Sigmoid colon (tissue), 7 donors: ENCODE measurements at regions of chr7 and their contacts with region 1.

Region 1: GRCh38 chr7:37201003-37201875 is 247.4 kb downstream of the ELMO1 start:
- DNase-seq: peak; percentile 94
- H3K4me3 ChIP-seq: no peak overlapping the region
- H3K27ac ChIP-seq: peak overlapping the region; percentile 72 to 88 (median 78)
- H3K4me1 ChIP-seq: peaks cover 0 to 43% (median 32%) of the 10 kb centered on the region in 4 donors
- H3K27me3 ChIP-seq: no peaks in the 10 kb centered on the region
- CTCF ChIP-seq: peak; percentile 73 to 84 (median 79)
- EP300 ChIP-seq: peak in 2 of 4 donors; percentile 21 to 82
- POLR2A ChIP-seq: no peak

Region 2: DNA sequence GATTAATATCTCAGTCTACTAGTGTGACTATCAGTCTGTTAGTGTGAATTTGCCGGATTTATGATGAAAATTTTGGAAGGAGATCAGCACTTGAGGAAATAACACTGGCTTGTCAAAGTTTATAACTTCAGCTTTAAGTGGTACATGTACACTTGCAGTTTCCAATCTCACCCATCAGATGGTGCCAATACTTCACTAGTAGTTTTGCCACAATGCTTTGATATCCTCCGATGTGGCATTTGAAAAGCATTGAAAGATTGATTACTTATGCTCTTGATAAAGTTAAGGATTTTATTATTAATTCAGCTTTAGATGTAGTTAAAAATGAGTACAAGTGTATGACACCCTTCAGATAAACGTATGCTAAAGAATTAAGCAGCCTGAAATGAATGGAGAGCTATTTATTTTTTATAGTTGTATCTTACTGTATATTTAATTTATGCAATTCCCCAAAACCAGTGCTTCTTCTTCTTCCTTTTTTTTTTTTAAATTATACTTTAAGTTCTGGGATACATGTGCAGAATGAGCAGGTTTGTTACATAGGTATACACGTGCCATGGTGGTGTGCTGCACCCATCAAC is 713.4 kb before region 1 on chr7:
- intact Hi-C with region 1: loop called (anchors 5 kb)
- DNase-seq: no peak
- H3K4me3 ChIP-seq: no peak overlapping the region
- H3K27ac ChIP-seq: no peak overlapping the region
- H3K4me1 ChIP-seq: no peaks in the 10 kb centered on the region
- H3K27me3 ChIP-seq: no peaks in the 10 kb centered on the region
- CTCF ChIP-seq: peak in 3 of 4 experiments; percentile 23 to 59 (median 46)
- EP300 ChIP-seq: no peak
- POLR2A ChIP-seq: no peak

Region 3: DNA sequence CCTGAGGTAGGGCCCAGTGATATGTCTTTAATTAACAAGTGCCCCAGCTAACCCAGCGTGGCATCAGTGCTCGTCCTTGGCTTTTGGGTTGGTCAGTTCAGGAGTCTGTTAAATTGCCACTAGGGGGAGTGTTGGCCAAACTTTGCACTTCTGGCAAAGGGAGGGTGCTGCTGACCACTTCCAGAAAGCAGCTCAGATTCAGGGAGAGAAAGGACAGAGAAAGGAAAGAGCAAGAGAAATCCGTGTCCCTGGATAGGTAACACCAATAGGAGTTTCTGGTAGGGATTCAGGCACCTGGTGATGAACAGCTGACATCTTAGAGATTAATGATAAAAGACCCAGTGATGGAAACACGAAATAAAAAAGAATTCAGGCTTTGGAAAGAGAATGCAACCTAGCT is 233.9 kb before region 1 on chr7:
- intact Hi-C with region 1: loop called (anchors 1 kb)
- DNase-seq: peak; percentile 83
- H3K4me3 ChIP-seq: no peak overlapping the region
- H3K27ac ChIP-seq: peak overlapping the region in 1 of 4 donors; percentile 39
- H3K4me1 ChIP-seq: peaks cover 0 to 10% (median 4%) of the 10 kb centered on the region in 4 donors
- H3K27me3 ChIP-seq: no peaks in the 10 kb centered on the region
- CTCF ChIP-seq: peak in 3 of 4 experiments; percentile 64 to 83 (median 76)
- EP300 ChIP-seq: no peak
- POLR2A ChIP-seq: no peak

Region 4: GRCh38 chr7:37181550-37181932 is 19.7 kb before region 1 on chr7:
- intact Hi-C with region 1: loop called (anchors 2 kb)
- DNase-seq: no peak
- H3K4me3 ChIP-seq: no peak overlapping the region
- H3K27ac ChIP-seq: no peak overlapping the region
- H3K4me1 ChIP-seq: peaks cover 0 to 6% (median 0%) of the 10 kb centered on the region in 4 donors
- H3K27me3 ChIP-seq: no peaks in the 10 kb centered on the region
- CTCF ChIP-seq: no peak
- EP300 ChIP-seq: no peak
- POLR2A ChIP-seq: no peak

Region 5: DNA sequence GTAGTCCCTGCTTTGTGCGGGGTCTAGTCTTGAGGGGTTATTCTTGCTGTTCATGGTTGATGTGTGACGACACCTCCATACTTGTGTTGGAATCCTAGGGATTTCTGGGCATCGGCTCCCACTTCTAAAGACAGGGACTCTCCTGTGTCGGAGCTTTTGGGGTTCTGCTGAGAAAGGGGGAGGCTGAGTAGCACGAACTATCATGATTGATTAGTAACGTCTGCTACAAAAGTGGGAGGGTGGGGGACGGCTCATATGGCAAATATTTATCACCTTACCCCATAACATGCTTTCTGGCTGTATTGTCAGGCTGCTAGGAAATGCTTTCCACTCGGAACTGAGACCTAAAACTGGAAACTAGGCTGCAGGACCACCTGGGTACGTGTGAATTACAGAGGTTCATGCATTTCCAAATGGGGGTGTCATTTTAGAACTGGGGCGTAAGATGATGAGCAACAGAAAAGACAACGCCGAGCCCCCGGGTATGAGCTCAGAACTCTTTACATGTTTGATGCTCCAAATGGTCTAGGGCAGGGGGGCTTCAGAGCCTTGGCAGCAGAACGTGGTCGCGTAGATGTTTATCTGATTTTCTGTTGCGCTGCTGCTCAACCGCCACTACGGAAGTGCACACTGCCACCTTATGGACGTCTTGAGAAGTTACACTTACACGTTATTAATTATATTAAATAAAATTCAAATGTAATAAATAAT is 632.0 kb after region 1 on chr7:
- intact Hi-C with region 1: loop called (anchors 5 kb)
- DNase-seq: peak; percentile 66
- H3K4me3 ChIP-seq: peak overlapping the region in 3 of 4 donors; percentile 26 to 32 (median 30)
- H3K27ac ChIP-seq: no peak overlapping the region
- H3K4me1 ChIP-seq: peaks cover 0 to 5% (median 0%) of the 10 kb centered on the region in 4 donors
- H3K27me3 ChIP-seq: no peaks in the 10 kb centered on the region
- CTCF ChIP-seq: peak in 3 of 4 experiments; percentile 35 to 68 (median 46)
- EP300 ChIP-seq: no peak
- POLR2A ChIP-seq: no peak